ENCODE measurements at regions of chr5 and their contacts with region 1.

Region 1: GRCh38 chr5:170740551-170741205 is 42.8 kb upstream of the GABRP start:
- DNase-seq: peak in 1 of 3 donors; percentile 1
- ATAC-seq: no peak
- H3K4me3 ChIP-seq: no peak overlapping the region
- H3K27ac ChIP-seq: no peak overlapping the region
- H3K4me1 ChIP-seq: peaks cover 0 to 4% (median 0%) of the 10 kb centered on the region in 4 donors
- H3K27me3 ChIP-seq: no peaks in the 10 kb centered on the region
- CTCF ChIP-seq: no peak
- POLR2A ChIP-seq: no peak

Region 2: GRCh38 chr5:170791325-170791954 is 50.8 kb after region 1 on chr5:
- intact Hi-C with region 1: loop called in 1 of 2 experiments (anchors 5 kb)
- DNase-seq: peak in 2 of 3 donors; percentile 55 to 62
- ATAC-seq: peak; percentile 37 to 84 (median 65)
- H3K4me3 ChIP-seq: no peak overlapping the region
- H3K27ac ChIP-seq: no peak overlapping the region
- H3K4me1 ChIP-seq: no peaks in the 10 kb centered on the region
- H3K27me3 ChIP-seq: no peaks in the 10 kb centered on the region
- CTCF ChIP-seq: peak; percentile 39 to 61 (median 47)
- POLR2A ChIP-seq: no peak

Region 3: GRCh38 chr5:170860818-170861586 is 120.3 kb after region 1 on chr5:
- intact Hi-C with region 1: no loop called
- DNase-seq: no peak
- ATAC-seq: peak in 3 of 4 donors; percentile 20 to 30 (median 23)
- H3K4me3 ChIP-seq: no peak overlapping the region
- H3K27ac ChIP-seq: no peak overlapping the region
- H3K4me1 ChIP-seq: no peaks in the 10 kb centered on the region
- H3K27me3 ChIP-seq: no peaks in the 10 kb centered on the region
- CTCF ChIP-seq: no peak
- POLR2A ChIP-seq: no peak

Region 4: GRCh38 chr5:171080186-171080938 is 339.7 kb after region 1 on chr5:
- intact Hi-C with region 1: no loop called
- DNase-seq: peak in 1 of 3 donors; percentile 62
- ATAC-seq: peak; percentile 77 to 87 (median 84)
- H3K4me3 ChIP-seq: no peak overlapping the region
- H3K27ac ChIP-seq: peak overlapping the region in 1 of 3 donors; percentile 78
- H3K4me1 ChIP-seq: peaks cover 0 to 15% (median 0%) of the 10 kb centered on the region in 4 donors
- H3K27me3 ChIP-seq: no peaks in the 10 kb centered on the region
- CTCF ChIP-seq: no peak
- POLR2A ChIP-seq: no peak

Measured in right lobe of liver (tissue), 6 donors.